ENCODE measurements at regions of chr22 and their contacts with region 1.

Region 1: DNA sequence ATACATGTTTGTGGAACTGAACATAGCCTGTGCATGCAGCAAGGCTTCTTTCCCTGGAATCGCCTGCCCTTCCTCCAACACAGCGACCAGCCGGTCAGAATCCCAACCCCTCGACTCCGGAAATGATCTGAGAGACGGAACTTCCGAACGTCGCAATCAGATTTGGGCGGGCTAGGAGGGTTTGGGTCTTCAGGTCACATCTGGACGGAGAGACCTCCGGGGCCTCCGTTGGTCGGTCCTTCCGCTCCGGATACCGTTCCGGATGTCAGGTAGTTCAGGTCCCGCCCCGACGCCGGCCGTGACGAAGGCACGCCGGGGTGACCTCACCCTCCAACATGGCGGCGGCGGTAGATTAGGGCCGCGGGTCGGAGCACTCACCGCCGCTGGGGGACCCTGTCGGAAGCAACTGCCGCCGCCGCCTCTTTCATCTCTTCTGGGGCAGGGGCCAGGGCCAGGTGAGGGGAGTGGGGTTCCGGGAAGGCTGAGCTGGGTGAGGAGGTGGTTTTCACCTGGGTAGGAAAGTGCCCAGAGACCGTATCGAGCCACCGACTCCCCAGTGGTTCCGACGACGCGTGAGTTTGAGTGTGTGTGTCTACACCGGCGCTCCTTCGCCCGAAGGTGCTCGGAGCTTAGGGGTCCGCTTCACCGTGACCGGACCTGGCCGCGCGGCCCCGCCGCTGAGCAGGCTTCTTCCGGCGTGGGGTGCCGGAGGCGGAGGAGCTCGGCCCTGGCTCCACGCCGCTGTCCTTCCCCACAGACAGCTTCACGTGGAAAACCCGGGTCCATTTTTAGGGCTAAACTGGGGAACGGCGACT is at the start of gene BCL2L13:
- DNase-seq: peak; percentile 94
- ATAC-seq: peak; percentile 94
- H3K4me3 ChIP-seq: peak within 1 kb of the TSS; percentile 67 to 100 (median 81)
- H3K4me3 Mint-ChIP-seq: peak within 1 kb of the TSS; percentile 96
- H3K27ac ChIP-seq: peak within 1 kb of the TSS; percentile 100
- H3K27ac Mint-ChIP-seq: peak within 1 kb of the TSS; percentile 97
- H3K4me1 ChIP-seq: peaks cover 15 to 20% of the 10 kb centered on the region in 2 donors
- H3K4me1 Mint-ChIP-seq: peaks cover 28% of the 10 kb centered on the region
- H3K27me3 ChIP-seq: no peaks in the 10 kb centered on the region
- H3K27me3 Mint-ChIP-seq: no peaks in the 10 kb centered on the region
- CTCF ChIP-seq: no peak
- total RNA-seq, gene BCL2L13: 29.9 and 37.2 TPM in 2 replicates

Region 2: GRCh38 chr22:17580441-17581031 is 58.1 kb before region 1 on chr22:
- CTCF ChIA-PET with region 1: no interaction called
- POLR2A ChIA-PET with region 1: no interaction called
- intact Hi-C with region 1: no loop called
- DNase-seq: no peak
- ATAC-seq: no peak
- H3K4me3 ChIP-seq: no peak overlapping the region
- H3K4me3 Mint-ChIP-seq: no peak overlapping the region
- H3K27ac ChIP-seq: no peak overlapping the region
- H3K27ac Mint-ChIP-seq: no peak overlapping the region
- H3K4me1 ChIP-seq: no peaks in the 10 kb centered on the region
- H3K4me1 Mint-ChIP-seq: no peaks in the 10 kb centered on the region
- H3K27me3 ChIP-seq: peaks cover 0 to 5% (median 0%) of the 10 kb centered on the region in 4 experiments
- H3K27me3 Mint-ChIP-seq: peaks cover 3% of the 10 kb centered on the region
- CTCF ChIP-seq: no peak

Region 3: GRCh38 chr22:17597217-17597616 is 41.4 kb before region 1 on chr22:
- CTCF ChIA-PET with region 1: no interaction called
- POLR2A ChIA-PET with region 1: interaction called, 3 read pairs
- intact Hi-C with region 1: loop called (anchors 2 kb)
- DNase-seq: no peak
- ATAC-seq: no peak
- H3K4me3 ChIP-seq: no peak overlapping the region
- H3K4me3 Mint-ChIP-seq: no peak overlapping the region
- H3K27ac ChIP-seq: no peak overlapping the region
- H3K27ac Mint-ChIP-seq: no peak overlapping the region
- H3K4me1 ChIP-seq: peaks cover 26 to 27% of the 10 kb centered on the region in 2 donors
- H3K4me1 Mint-ChIP-seq: peaks cover 30% of the 10 kb centered on the region
- H3K27me3 ChIP-seq: no peaks in the 10 kb centered on the region
- H3K27me3 Mint-ChIP-seq: no peaks in the 10 kb centered on the region
- CTCF ChIP-seq: no peak

Region 4: GRCh38 chr22:17910561-17911311 is 272.1 kb after region 1 on chr22:
- CTCF ChIA-PET with region 1: no interaction called
- POLR2A ChIA-PET with region 1: no interaction called
- intact Hi-C with region 1: no loop called
- DNase-seq: no peak
- ATAC-seq: no peak
- H3K4me3 ChIP-seq: no peak overlapping the region
- H3K4me3 Mint-ChIP-seq: no peak overlapping the region
- H3K27ac ChIP-seq: peak overlapping the region in 1 of 2 donors; percentile 37
- H3K27ac Mint-ChIP-seq: peak overlapping the region; percentile 11
- H3K4me1 ChIP-seq: peaks cover 0 to 25% of the 10 kb centered on the region in 2 donors
- H3K4me1 Mint-ChIP-seq: peaks cover 72% of the 10 kb centered on the region
- H3K27me3 ChIP-seq: no peaks in the 10 kb centered on the region
- H3K27me3 Mint-ChIP-seq: no peaks in the 10 kb centered on the region
- CTCF ChIP-seq: no peak

Measured in B cell (primary cell).